Activated CD8-positive, alpha-beta T cell treated with anti-CD3 and anti-CD28 coated beads, Interleukin-2, amount 10 ng/mL, durations not matched to agents 7 days and 5 days (primary cell): ENCODE measurements at regions of chr17 and their contacts with region 1.

Region 1: DNA sequence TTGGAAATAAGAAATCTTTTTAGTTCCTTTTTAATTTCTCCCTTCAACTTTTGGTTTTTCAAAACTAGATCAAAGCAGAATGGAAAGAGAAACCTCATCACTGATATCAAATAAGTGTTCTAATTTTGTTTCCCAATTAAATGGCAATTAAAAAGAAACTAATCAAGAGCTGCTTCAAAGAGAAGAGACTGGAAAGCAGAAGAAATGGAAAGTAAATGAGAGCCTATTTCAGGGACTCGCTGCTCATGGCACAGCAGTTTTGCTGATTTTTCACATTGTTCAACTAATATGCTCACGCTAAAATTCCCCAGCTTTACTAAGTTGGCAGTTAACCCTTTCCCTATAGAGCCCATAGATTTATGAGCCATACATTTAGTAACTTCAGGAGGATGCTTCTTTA is 6.5 kb downstream of the NMT1 start:
- DNase-seq: no peak
- ATAC-seq: no peak
- H3K4me3 Mint-ChIP-seq: no peak overlapping the region
- H3K27ac Mint-ChIP-seq: no peak overlapping the region
- H3K4me1 Mint-ChIP-seq: peaks cover 23% of the 10 kb centered on the region
- H3K27me3 Mint-ChIP-seq: no peaks in the 10 kb centered on the region

Region 2: DNA sequence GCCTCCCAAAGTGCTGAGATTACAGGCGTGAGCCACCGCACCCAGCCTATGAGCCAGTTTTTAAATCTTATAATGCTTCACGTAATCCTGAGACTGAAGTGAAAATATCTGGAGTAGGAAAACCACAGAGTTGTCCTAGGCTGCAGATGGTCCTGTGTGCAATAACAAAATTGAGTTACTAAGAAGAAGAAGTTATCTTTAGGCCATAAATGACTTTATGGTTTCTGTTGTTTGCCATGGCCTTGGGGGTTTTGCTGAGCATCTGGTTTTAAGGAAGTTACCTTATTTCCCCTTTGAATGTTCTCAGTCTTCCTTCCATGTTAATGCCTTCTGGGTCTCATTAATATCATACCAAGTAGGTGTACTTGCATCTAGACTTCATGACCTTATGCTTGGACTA is 10.0 kb after region 1 on chr17:
- CTCF ChIA-PET with region 1: interaction called, 10 read pairs
- POLR2A ChIA-PET with region 1: no interaction called
- DNase-seq: no peak
- ATAC-seq: no peak
- H3K4me3 Mint-ChIP-seq: no peak overlapping the region
- H3K27ac Mint-ChIP-seq: no peak overlapping the region
- H3K4me1 Mint-ChIP-seq: peaks cover 15% of the 10 kb centered on the region
- H3K27me3 Mint-ChIP-seq: no peaks in the 10 kb centered on the region

Region 3: DNA sequence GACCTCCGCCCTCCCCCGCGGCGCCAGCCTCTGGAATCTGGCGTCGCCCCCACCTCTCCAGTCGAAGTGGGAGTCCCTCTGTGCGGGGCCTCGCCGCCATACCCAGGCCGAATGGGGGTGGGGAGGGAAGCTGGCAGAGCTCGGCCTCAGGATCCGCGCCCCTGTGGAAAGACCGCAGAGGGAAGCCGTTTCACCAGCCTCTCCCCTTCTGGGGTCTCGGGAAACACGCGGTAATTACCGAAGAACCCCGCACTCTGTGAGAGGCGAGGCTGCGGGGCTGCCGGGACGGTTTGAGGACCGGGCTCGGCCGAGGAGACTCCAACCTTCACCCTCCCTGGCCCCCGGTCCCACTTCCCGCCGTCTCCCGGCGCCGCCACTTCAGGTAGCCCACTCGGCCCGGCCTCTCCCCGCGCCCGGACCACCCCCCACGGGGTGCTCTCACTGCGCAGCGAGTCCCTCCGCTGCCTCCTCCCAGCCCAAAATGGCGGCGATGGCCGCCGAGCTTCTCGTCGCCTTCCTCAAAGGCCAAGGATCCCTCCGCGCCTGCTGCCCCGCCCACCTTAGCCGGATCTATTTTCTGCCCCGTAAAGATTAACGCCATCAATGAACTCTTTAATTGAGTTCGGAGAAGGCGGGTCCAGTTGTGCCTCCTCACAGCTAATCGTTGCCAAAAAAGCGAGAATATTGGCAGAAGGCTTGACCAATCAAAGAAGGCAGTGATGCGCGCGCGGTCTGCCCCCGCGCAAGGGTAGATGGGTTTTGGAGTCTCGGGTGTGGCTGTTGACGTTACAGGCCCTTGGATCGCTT is 93.6 kb after region 1 on chr17:
- CTCF ChIA-PET with region 1: no interaction called
- POLR2A ChIA-PET with region 1: no interaction called
- DNase-seq: peak; percentile 99
- ATAC-seq: peak; percentile 98
- H3K4me3 Mint-ChIP-seq: peak overlapping the region; percentile 99
- H3K27ac Mint-ChIP-seq: peak overlapping the region; percentile 98
- H3K4me1 Mint-ChIP-seq: peaks cover 43% of the 10 kb centered on the region
- H3K27me3 Mint-ChIP-seq: no peaks in the 10 kb centered on the region